Ascending aorta (tissue), 2 donors: ENCODE measurements at regions of chr20 and their contacts with region 1.

Region 1: GRCh38 chr20:6265204-6265904 is 142.5 kb upstream of the FERMT1 start:
- DNase-seq: no peak
- H3K4me3 ChIP-seq: peak overlapping the region; percentile 25 to 43
- H3K27ac ChIP-seq: peak overlapping the region; percentile 45 to 65
- H3K4me1 ChIP-seq: peaks cover 0 to 7% of the 10 kb centered on the region in 2 donors
- H3K27me3 ChIP-seq: no peaks in the 10 kb centered on the region
- CTCF ChIP-seq: peak; percentile 33 to 49 (median 35)

Region 2: GRCh38 chr20:6169251-6169650 is 96.1 kb before region 1 on chr20:
- intact Hi-C with region 1: loop called (anchors 5 kb)
- DNase-seq: no peak
- H3K4me3 ChIP-seq: no peak overlapping the region
- H3K27ac ChIP-seq: no peak overlapping the region
- H3K4me1 ChIP-seq: peaks cover 0 to 5% of the 10 kb centered on the region in 2 donors
- H3K27me3 ChIP-seq: no peaks in the 10 kb centered on the region
- CTCF ChIP-seq: no peak

Region 3: GRCh38 chr20:6636209-6637159 is 371.1 kb after region 1 on chr20:
- intact Hi-C with region 1: loop called (anchors 5 kb)
- DNase-seq: peak in 1 of 2 donors; percentile 63
- H3K4me3 ChIP-seq: no peak overlapping the region
- H3K27ac ChIP-seq: no peak overlapping the region
- H3K4me1 ChIP-seq: peaks cover 0 to 4% of the 10 kb centered on the region in 2 donors
- H3K27me3 ChIP-seq: no peaks in the 10 kb centered on the region
- CTCF ChIP-seq: peak; percentile 54 to 76 (median 59)

Region 4: GRCh38 chr20:6704132-6704861 is 438.9 kb after region 1 on chr20:
- intact Hi-C with region 1: loop called (anchors 5 kb)
- DNase-seq: no peak
- H3K4me3 ChIP-seq: no peak overlapping the region
- H3K27ac ChIP-seq: peak overlapping the region; percentile 86 to 90
- H3K4me1 ChIP-seq: peaks cover 0 to 29% of the 10 kb centered on the region in 2 donors
- H3K27me3 ChIP-seq: no peaks in the 10 kb centered on the region
- CTCF ChIP-seq: no peak

Region 5: DNA sequence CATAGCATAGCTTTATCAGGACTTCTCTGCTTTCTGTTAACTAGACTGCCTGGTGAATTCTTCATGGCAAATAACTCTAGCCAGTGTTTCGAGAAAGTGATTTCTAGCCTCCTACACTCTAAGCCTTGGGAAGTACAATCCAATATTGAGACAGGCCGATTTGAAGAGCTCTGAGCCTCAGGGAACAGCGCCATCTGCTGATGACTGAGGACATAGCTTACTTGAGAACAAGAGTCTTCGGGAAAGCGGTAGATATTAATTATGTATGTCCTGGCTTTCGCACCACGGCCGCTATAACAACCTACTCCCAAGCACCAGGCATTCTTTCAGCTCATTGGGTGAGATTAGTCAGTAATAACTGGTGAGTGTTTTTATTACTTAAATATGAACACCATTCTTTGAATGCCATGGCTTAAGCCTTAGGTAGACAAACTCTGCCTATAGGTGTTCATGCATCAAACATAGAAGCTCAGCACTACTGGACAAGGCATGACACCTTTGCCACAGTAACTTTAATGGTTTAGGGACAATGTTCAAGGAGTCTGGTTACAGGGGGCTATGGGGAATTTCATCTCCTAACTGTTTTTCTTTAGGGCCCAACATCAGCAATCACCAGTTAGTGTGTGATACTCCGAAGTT is 1020.7 kb after region 1 on chr20:
- intact Hi-C with region 1: loop called (anchors 5 kb)
- DNase-seq: peak in 1 of 2 donors; percentile 86
- H3K4me3 ChIP-seq: no peak overlapping the region
- H3K27ac ChIP-seq: no peak overlapping the region
- H3K4me1 ChIP-seq: no peaks in the 10 kb centered on the region
- H3K27me3 ChIP-seq: no peaks in the 10 kb centered on the region
- CTCF ChIP-seq: peak; percentile 12 to 78 (median 73)

Region 6: GRCh38 chr20:7859356-7859802 is 1594.0 kb after region 1 on chr20:
- intact Hi-C with region 1: loop called (anchors 10 kb)
- DNase-seq: no peak
- H3K4me3 ChIP-seq: no peak overlapping the region
- H3K27ac ChIP-seq: no peak overlapping the region
- H3K4me1 ChIP-seq: no peaks in the 10 kb centered on the region
- H3K27me3 ChIP-seq: no peaks in the 10 kb centered on the region
- CTCF ChIP-seq: peak; percentile 36 to 74 (median 51)

Region 7: GRCh38 chr20:8019246-8019997 is 1754.1 kb after region 1 on chr20 and contains the start of gene TMX4:
- intact Hi-C with region 1: loop called (anchors 10 kb)
- DNase-seq: peak; percentile 93 to 98
- H3K4me3 ChIP-seq: peak within 1 kb of the TSS; percentile 74 to 79
- H3K27ac ChIP-seq: peak within 1 kb of the TSS; percentile 96 to 97
- H3K4me1 ChIP-seq: peaks cover 0 to 7% of the 10 kb centered on the region in 2 donors
- H3K27me3 ChIP-seq: no peaks in the 10 kb centered on the region
- CTCF ChIP-seq: peak in 2 of 3 experiments; percentile 25 to 64
- total RNA-seq, gene TMX4: 65.3 TPM